Activated naive CD4-positive, alpha-beta T cell treated with anti-CD3 and anti-CD28 coated beads for 36 hours (primary cell): ENCODE measurements at regions of chr2 and their contacts with region 1.

Region 1: DNA sequence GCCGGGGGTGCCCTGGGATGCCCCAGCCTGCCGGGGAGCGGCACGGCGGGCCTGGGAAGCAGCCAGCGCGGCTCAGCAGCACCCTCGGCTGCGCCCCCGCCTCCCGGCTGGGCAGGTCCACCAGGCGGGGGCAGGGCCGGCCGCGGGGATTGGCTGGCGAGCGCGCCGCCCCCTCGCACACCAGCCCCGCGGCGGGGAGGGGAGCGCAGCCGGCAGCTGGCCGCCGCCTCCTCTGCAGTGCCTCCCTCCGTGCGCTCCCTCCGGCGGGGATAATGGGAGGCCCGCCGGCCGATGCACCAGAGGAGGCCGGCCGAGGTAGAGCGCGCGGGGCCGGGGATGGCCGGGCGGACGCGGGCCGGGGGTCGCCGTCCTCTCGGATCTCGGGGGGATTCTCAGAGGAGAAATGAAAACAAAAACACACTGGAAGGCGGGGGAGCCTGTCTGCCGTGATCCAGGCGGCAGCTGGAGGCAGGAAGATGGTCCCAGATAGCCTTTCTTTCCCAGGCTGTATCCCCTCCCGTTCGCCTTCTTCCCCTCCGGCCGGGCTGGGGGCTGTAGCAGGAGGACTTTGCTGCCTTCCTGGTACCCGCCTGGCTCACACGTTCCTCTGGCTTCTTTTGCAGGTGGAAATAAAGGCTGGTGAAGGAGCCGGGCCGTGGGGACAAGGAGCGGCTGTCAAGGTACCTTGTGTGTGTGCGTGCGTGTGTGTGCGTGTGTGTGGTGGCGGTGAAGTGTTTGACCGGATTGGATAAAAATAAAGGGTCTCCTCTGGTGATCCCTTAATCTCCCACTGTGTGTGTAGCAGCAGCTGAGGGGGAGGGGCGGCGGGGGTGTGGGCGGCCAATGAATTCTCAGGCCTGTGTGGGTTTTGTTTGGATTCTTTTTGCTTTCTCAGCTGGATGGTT is 18.0 kb downstream of the TET3 start:
- DNase-seq: peak; percentile 39
- H3K4me3 Mint-ChIP-seq: peak overlapping the region; percentile 67
- H3K27ac Mint-ChIP-seq: peak overlapping the region; percentile 69
- H3K4me1 Mint-ChIP-seq: peaks cover 83% of the 10 kb centered on the region
- H3K27me3 Mint-ChIP-seq: no peaks in the 10 kb centered on the region

Region 2: DNA sequence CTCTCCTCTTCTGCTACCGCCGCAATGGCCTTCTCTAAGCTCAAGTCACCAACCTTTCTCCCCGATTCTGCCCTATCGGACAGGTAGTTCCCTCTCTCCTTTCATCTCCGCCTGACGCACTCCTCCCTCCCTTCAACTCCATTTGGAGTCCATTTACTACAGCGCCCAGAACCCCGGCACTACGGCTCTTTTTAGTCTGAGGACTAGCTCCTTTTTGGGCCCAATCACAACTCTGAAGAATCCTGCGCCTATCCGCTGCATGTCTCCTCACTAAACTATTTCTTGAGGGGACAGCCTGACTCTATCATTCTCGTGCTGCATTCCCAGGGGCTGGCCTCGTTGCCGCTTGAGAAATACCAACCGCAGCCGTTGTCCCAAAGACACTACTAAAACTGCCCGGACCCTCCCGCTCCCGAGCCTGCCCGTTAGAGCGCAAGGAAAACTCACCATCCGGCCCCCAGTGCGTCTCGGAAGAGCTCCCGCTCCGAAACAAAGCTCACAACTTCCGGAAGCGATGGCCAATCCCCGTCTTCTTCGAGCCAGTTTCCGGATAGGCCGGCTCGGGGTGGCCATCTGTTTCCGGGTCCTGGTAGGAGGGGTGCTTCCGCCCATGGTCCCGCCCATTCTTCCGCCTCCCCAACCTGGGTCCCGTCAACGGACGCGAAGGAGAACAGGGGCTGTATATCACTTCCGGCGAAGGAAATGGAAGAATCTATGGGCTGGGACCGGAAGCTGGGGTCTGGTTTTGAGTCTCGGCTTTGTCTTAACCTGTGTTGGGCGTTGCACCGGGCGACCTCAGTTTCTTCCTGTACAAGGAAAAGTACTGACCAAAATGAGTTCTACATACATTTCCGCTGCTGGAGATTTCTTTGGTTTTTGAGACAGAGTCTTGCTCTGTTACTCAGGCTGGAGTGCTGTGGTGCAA is 265.6 kb before region 1 on chr2 and contains the start of gene TPRKB:
- CTCF ChIA-PET with region 1: no interaction called
- intact Hi-C with region 1: loop called (anchors 1 kb)
- DNase-seq: peak; percentile 99
- H3K4me3 Mint-ChIP-seq: peak within 1 kb of the TSS; percentile 88
- H3K27ac Mint-ChIP-seq: peak within 1 kb of the TSS; percentile 76
- H3K4me1 Mint-ChIP-seq: peaks cover 15% of the 10 kb centered on the region
- H3K27me3 Mint-ChIP-seq: no peaks in the 10 kb centered on the region
- total RNA-seq, gene TPRKB: 30.5 to 32.5 TPM

Region 3: DNA sequence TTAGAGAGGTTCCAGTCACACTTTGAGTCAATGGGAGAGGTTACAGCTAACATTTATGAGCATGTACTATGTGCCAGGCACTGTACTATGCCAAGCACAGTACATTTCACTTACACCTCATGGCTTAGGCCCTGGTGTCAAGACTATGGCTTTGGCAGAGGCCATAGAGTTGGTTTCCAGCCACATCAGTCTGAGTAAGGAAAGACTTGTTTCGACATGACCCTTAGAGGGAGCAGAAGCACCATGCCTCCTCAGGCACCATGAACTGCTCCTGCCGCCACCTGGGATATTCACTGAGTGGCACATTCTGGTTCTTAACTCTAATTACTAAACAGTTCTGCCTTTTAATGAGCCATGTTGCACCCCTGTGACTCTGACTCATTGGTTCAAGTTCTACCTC is 63.3 kb before region 1 on chr2:
- CTCF ChIA-PET with region 1: interaction called, 3 read pairs
- intact Hi-C with region 1: loop called (anchors 1 kb)
- DNase-seq: peak; percentile 76
- H3K4me3 Mint-ChIP-seq: no peak overlapping the region
- H3K27ac Mint-ChIP-seq: peak overlapping the region; percentile 76
- H3K4me1 Mint-ChIP-seq: peaks cover 84% of the 10 kb centered on the region
- H3K27me3 Mint-ChIP-seq: no peaks in the 10 kb centered on the region

Region 4: GRCh38 chr2:73979686-73980085 is 23.1 kb before region 1 on chr2:
- CTCF ChIA-PET with region 1: interaction called, 4 read pairs
- intact Hi-C with region 1: loop called (anchors 1 kb)
- DNase-seq: peak; percentile 32
- H3K4me3 Mint-ChIP-seq: peak overlapping the region; percentile 53
- H3K27ac Mint-ChIP-seq: peak overlapping the region; percentile 88
- H3K4me1 Mint-ChIP-seq: peaks cover 62% of the 10 kb centered on the region
- H3K27me3 Mint-ChIP-seq: no peaks in the 10 kb centered on the region

Region 5: DNA sequence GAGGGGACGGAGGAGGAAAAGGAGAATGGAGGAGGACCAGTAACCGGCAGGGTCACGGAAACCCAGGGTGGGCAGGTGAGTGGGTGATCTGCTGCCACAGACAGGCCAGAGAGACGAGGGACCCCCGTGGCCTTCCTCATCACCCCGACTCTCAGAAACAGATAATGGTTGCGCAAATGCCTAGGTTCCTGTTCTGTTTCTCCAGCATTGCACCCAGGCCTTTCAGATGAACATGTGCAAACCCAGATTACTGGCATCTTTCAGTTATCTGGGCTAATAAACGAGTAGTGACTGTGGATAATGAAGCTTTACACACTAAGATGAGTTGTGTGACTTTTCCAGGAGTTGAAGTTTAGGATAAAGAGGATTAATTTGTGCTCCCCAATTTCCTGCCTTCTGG is 28.5 kb after region 1 on chr2:
- CTCF ChIA-PET with region 1: interaction called, 11 read pairs
- intact Hi-C with region 1: loop called (anchors 1 kb)
- DNase-seq: no peak
- H3K4me3 Mint-ChIP-seq: peak overlapping the region; percentile 84
- H3K27ac Mint-ChIP-seq: peak overlapping the region; percentile 99
- H3K4me1 Mint-ChIP-seq: peaks cover 83% of the 10 kb centered on the region
- H3K27me3 Mint-ChIP-seq: no peaks in the 10 kb centered on the region

Region 6: DNA sequence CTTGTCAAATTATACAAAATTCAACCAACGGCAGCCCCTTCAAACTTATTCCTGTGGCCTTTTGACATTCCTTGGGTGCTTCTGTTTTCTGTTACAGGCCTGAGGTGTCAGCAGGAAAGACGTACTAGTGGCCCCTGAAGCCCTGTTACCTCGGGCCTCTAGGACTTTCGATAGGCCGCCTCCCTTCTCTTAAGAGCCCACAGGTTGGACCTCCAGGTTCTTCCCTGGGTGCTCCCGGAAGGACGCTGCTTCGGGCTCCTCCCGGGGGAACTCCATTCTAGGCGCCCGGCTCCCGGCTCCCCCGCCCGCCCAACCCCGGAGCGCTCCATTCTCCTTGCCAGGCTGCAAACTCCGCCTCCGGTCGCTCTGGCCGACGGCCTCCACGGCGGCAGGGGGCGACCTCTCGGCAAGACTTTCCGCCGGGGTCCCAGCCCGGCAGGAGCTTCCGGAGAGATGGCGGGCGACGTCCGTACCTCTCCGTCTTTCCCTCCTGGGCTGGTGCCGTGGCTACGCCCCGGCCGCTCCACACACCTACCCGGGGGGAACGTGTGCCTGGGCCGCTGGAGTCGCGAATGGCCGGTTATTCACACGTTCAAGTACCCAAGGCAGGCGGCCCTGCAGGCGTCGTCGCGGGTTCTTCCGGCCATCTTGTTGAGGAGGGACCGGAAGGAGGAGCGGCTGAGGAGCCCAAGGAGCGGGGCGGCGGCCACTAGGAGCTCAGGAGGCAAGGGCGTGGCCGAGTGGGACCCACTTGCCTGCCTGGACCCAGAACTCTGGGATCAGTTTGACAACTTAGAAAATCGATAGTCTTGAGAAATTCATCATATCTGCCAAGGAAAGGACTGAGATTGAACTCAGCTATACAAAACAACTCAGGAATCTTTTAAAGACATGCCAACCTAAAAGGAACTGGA is 117.4 kb after region 1 on chr2:
- CTCF ChIA-PET with region 1: interaction called, 3 read pairs
- intact Hi-C with region 1: loop called (anchors 1 kb)
- DNase-seq: peak; percentile 88
- H3K4me3 Mint-ChIP-seq: peak overlapping the region; percentile 82
- H3K27ac Mint-ChIP-seq: peak overlapping the region; percentile 88
- H3K4me1 Mint-ChIP-seq: peaks cover 12% of the 10 kb centered on the region
- H3K27me3 Mint-ChIP-seq: no peaks in the 10 kb centered on the region

Region 7: DNA sequence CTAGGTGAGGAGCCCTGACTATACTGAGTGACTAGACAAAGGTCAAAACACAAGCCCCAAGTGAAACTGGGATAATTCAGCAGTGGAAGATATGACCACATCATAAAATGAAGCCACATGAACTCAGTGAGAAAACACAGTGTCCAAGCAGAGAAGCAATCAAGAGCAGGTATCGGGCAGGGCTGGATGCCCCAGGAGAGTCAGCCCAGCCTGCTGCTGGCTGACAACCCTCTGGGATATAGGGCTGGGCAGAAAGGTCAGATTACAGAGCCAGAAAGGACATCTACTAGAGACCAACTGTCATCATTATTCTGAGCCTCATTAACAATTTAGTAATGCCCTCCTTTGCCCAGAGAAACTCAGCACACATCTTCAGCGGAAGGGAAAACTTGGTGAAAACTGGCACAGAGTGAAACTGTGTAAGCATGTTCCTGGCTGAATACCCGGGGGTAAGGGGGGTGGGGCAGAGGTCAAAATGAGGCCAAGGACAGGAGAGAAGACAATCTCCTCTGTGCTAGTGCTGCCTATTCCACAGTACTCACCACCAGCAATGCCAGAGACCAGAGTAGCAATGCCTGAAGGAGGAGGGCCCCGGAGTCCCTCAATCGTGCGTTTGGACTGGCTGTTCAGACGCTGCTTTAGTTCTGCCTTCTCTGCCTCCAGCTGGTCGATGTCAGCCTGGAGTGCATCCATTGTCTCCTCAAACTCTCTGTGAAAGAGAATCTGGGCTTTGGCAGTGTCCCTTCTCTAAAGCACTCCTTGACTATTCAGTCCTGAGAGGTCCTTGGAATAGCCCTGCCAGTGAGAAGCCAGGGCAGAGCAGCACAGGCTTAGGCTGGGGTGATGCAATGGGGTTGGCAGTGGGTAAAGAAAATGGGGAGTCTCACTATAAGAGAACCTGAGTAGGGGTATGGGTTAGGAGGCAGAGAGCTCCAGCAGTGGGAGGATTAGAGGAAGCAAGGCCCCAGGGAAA is 362.1 kb after region 1 on chr2:
- CTCF ChIA-PET with region 1: no interaction called
- intact Hi-C with region 1: no loop called
- DNase-seq: no peak
- H3K4me3 Mint-ChIP-seq: no peak overlapping the region
- H3K27ac Mint-ChIP-seq: no peak overlapping the region
- H3K4me1 Mint-ChIP-seq: no peaks in the 10 kb centered on the region
- H3K27me3 Mint-ChIP-seq: no peaks in the 10 kb centered on the region

Region 8: DNA sequence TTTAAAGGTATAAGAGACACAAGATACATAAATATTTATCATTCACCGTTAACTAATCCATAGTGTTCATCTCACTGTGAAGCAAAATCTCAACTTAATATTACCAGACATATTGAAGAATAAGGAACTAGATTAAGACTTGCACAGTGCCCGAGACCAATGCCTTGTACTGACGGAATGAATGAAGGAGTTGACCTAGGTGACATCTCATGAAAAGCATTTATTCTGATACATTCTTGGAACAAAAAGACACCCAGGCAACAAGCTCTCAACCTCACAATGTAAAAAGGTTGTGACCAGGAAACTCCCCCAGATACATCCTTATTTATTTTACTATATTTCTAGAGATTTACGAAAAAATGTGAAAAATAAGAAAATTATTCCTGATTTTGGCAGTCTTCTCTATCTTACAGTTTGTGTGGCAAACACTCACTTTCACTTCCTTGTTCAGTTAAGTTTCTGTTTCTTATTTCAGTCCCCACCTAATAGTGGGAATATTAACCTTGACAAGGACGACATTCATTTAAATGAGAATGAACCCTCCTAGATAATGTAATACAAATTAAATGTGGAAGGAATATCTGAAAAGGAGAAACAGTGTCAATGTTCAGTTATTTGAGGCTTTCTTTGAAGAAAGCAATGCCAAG is 617.0 kb after region 1 on chr2:
- CTCF ChIA-PET with region 1: no interaction called
- intact Hi-C with region 1: no loop called
- DNase-seq: no peak
- H3K4me3 Mint-ChIP-seq: no peak overlapping the region
- H3K27ac Mint-ChIP-seq: no peak overlapping the region
- H3K4me1 Mint-ChIP-seq: no peaks in the 10 kb centered on the region
- H3K27me3 Mint-ChIP-seq: peaks cover 5% of the 10 kb centered on the region